ENCODE measurements at regions of chrX and their contacts with region 1.

Region 1: GRCh38 chrX:94961730-94962129 is 1287.7 kb downstream of the FAM133A start:
- DNase-seq: no peak
- ATAC-seq: peak; percentile 79
- H3K4me3 ChIP-seq: no peak overlapping the region
- H3K27ac ChIP-seq: no peak overlapping the region
- H3K4me1 ChIP-seq: no peaks in the 10 kb centered on the region
- H3K27me3 ChIP-seq: no peaks in the 10 kb centered on the region
- CTCF ChIP-seq: no peak
- EP300 ChIP-seq: no peak
- POLR2A ChIP-seq: no peak
- RAD21 ChIP-seq: no peak

Region 2: GRCh38 chrX:94901849-94902248 is 59.9 kb before region 1 on chrX:
- CTCF ChIA-PET with region 1: no interaction called
- POLR2A ChIA-PET with region 1: no interaction called
- RAD21 ChIA-PET with region 1: no interaction called
- SMC1A ChIA-PET with region 1: no interaction called
- in situ Hi-C with region 1: no loop called
- intact Hi-C with region 1: no loop called
- DNase-seq: no peak
- ATAC-seq: no peak
- H3K4me3 ChIP-seq: no peak overlapping the region
- H3K27ac ChIP-seq: no peak overlapping the region
- H3K4me1 ChIP-seq: no peaks in the 10 kb centered on the region
- H3K27me3 ChIP-seq: no peaks in the 10 kb centered on the region
- CTCF ChIP-seq: no peak
- EP300 ChIP-seq: no peak
- POLR2A ChIP-seq: no peak
- RAD21 ChIP-seq: no peak

Region 3: DNA sequence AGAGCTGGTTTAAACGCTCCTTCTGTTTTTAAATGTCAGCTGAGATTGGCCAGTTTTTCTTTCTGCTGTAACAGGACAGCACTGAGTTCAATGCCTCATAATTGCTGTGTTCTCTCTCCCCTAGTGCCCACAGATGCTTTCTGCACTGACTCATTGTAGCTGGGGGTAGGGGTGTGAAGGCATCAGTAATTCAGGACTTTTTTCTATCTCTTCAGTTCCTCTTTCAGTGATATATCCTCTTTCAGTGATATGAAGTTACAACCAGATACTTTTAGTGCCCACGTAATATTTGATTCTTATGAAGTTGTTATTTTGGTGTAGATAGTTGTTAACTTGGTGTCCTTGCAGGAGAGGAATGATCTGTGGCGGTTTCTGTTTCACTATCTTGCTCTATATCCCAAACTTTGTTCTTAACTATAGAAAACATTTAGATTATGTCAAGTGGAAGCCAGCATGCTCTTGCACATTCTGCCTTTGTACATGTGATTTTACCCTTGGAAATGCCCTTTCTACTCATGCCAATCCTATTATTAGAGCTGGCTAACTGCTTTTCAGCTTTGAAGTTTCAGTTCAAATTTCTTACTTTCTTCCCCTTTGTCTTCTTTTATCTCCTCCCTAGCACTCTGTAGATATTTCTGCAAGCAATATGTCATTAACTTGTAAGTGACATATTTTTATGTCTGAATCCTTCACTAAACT is 29.3 kb before region 1 on chrX:
- CTCF ChIA-PET with region 1: interaction called, 12 read pairs
- POLR2A ChIA-PET with region 1: interaction called, 4 read pairs
- RAD21 ChIA-PET with region 1: interaction called, 5 read pairs
- SMC1A ChIA-PET with region 1: interaction called, 15 read pairs
- in situ Hi-C with region 1: no loop called
- intact Hi-C with region 1: no loop called
- DNase-seq: peak; percentile 12
- ATAC-seq: peak; percentile 97
- H3K4me3 ChIP-seq: no peak overlapping the region
- H3K27ac ChIP-seq: no peak overlapping the region
- H3K4me1 ChIP-seq: no peaks in the 10 kb centered on the region
- H3K27me3 ChIP-seq: no peaks in the 10 kb centered on the region
- CTCF ChIP-seq: no peak
- EP300 ChIP-seq: peak in 1 of 2 experiments; percentile 38; a peak in 1 of 4 replicates
- POLR2A ChIP-seq: no peak
- RAD21 ChIP-seq: no peak

Region 4: GRCh38 chrX:94977562-94977961 is 15.8 kb after region 1 on chrX:
- CTCF ChIA-PET with region 1: interaction called, 10 read pairs
- POLR2A ChIA-PET with region 1: no interaction called
- RAD21 ChIA-PET with region 1: interaction called, 9 read pairs
- SMC1A ChIA-PET with region 1: interaction called, 18 read pairs
- in situ Hi-C with region 1: no loop called
- intact Hi-C with region 1: no loop called
- DNase-seq: no peak
- ATAC-seq: peak; percentile 47
- H3K4me3 ChIP-seq: no peak overlapping the region
- H3K27ac ChIP-seq: no peak overlapping the region
- H3K4me1 ChIP-seq: no peaks in the 10 kb centered on the region
- H3K27me3 ChIP-seq: no peaks in the 10 kb centered on the region
- CTCF ChIP-seq: no peak
- EP300 ChIP-seq: no peak
- POLR2A ChIP-seq: no peak
- RAD21 ChIP-seq: no peak

Region 5: DNA sequence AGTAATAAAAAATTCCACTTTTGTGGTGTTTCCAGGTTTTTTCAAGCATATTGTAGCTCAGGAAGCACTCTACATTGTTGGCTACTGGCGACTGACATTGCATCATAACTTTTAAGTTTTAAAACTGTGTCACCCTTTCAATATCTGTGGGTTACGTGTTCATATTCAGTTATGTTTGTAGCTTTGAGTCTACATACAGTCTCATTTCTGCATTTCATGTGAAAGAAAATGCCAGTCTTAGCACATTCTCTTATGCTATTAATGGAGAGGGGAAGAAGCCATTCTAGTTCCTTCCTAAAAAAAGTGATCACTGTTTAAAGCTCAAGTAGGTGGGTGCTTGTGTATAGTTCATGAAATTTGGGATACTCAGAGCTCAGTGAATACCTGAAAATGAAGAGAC is 1761.1 kb after region 1 on chrX:
- CTCF ChIA-PET with region 1: no interaction called
- POLR2A ChIA-PET with region 1: no interaction called
- RAD21 ChIA-PET with region 1: no interaction called
- SMC1A ChIA-PET with region 1: no interaction called
- in situ Hi-C with region 1: no loop called
- intact Hi-C with region 1: no loop called
- DNase-seq: no peak
- ATAC-seq: no peak
- H3K4me3 ChIP-seq: no peak overlapping the region
- H3K27ac ChIP-seq: no peak overlapping the region
- H3K4me1 ChIP-seq: no peaks in the 10 kb centered on the region
- H3K27me3 ChIP-seq: no peaks in the 10 kb centered on the region
- CTCF ChIP-seq: no peak
- EP300 ChIP-seq: no peak
- POLR2A ChIP-seq: no peak
- RAD21 ChIP-seq: no peak